Activated naive CD4-positive, alpha-beta T cell treated with anti-CD3 and anti-CD28 coated beads for 36 hours (primary cell): ENCODE measurements at regions of chr2 and their contacts with region 1.

Region 1: GRCh38 chr2:176088048-176088936 is 4.2 kb upstream of the HOXD13 start:
- DNase-seq: peak; percentile 46
- H3K4me3 Mint-ChIP-seq: no peak overlapping the region
- H3K27ac Mint-ChIP-seq: no peak overlapping the region
- H3K4me1 Mint-ChIP-seq: peaks cover 9% of the 10 kb centered on the region
- H3K27me3 Mint-ChIP-seq: peaks cover 88% of the 10 kb centered on the region

Region 2: DNA sequence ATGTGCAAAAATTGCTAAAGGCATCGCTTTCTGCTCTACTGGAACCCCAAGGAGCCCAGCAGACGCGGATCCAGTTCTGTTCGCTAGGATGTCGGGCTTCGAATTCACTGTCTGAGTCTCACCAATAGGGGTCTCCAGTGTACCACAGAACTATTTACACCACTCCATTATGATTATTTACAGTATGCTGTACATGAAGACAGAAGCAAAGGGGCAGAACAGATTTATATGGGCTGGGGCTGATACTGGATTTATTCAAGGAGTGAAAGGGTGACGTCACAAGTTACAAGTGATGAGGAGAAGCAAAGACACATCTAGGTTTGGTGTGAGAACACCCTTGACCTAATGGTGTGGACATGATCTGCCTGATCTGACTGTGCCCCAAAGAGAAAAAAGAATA is 721.5 kb before region 1 on chr2:
- CTCF ChIA-PET with region 1: no interaction called
- intact Hi-C with region 1: loop called (anchors 2 kb)
- DNase-seq: peak; percentile 35
- H3K4me3 Mint-ChIP-seq: no peak overlapping the region
- H3K27ac Mint-ChIP-seq: no peak overlapping the region
- H3K4me1 Mint-ChIP-seq: no peaks in the 10 kb centered on the region
- H3K27me3 Mint-ChIP-seq: peaks cover 20% of the 10 kb centered on the region

Region 3: DNA sequence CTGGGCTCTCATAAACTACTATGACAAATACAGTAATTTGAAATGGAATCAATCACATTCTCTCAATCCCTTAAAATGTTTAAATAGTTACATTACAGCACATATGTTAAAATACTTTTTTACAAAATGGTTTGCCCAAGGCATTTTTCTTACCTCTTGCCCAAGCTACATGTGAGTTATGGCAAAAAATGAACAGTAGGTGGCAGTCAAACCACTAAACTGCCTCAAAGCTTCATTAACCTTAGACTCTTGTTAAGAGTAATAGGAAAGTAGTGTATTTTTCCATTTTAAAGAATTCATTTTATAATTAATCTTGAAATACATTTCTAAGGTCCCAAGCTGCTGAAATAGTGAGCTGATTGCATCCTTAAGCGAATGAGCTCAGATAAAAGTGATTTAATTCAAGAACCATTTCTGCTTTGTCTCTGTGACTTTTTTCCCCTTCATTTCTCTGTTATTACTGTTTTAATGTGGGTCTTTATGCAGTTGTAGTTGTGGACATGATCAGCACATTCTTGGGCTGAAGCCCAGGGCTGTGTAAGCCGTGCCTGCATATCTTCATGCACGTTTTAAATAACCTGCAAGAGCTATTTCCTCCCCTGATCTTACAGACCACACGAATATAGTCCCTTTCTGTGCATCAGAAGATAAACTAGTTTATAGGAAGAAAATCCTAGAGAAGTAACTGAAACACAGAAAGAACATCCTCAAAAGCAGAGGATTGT is 398.0 kb before region 1 on chr2:
- CTCF ChIA-PET with region 1: interaction called, 5 read pairs
- intact Hi-C with region 1: loop called (anchors 2 kb)
- DNase-seq: peak; percentile 56
- H3K4me3 Mint-ChIP-seq: no peak overlapping the region
- H3K27ac Mint-ChIP-seq: no peak overlapping the region
- H3K4me1 Mint-ChIP-seq: no peaks in the 10 kb centered on the region
- H3K27me3 Mint-ChIP-seq: peaks cover 26% of the 10 kb centered on the region